ENCODE measurements at regions of chr1 and their contacts with region 1.

Region 1: DNA sequence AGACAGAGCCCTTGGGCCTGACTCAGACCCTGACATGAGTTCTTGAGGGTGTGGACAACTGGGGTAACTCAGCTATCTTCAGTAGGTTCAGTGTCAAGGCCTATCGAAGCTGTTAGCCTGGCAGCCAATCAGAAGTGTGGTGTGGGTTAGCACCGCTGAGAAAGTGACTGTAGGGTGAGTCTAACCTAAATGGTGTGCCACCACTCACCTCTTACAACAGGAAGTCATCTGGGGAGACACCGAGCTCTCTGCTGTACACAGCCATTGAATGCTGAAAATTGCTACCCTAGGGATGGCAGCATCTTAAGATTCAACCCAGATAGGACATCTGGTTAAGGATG is 44.6 kb downstream of the RASSF5 start:
- DNase-seq: peak; percentile 86
- H3K4me3 Mint-ChIP-seq: peak overlapping the region; percentile 56
- H3K27ac Mint-ChIP-seq: peak overlapping the region; percentile 89
- H3K4me1 Mint-ChIP-seq: peaks cover 62% of the 10 kb centered on the region
- H3K27me3 Mint-ChIP-seq: no peaks in the 10 kb centered on the region

Region 2: DNA sequence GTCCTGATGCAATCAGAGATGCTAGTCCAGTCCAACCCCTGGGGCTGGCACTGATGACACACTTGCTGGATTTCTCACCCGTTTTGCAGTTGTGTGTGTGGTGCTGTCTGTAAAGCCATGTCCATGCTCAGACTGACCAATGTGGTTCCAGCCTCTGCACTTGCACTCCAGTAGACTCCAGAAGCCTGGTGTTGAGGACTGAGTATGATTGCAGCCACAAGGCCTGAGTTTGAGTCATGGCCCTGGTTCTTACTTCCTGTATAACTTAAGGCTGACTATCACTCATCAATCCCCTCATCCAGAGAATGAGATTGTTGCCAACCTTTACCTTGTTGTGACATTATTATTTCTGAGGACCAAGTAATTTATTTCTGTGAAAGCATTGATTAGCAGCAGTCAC is 116.5 kb before region 1 on chr1:
- CTCF ChIA-PET with region 1: no interaction called
- DNase-seq: no peak
- H3K4me3 Mint-ChIP-seq: no peak overlapping the region
- H3K27ac Mint-ChIP-seq: no peak overlapping the region
- H3K4me1 Mint-ChIP-seq: no peaks in the 10 kb centered on the region
- H3K27me3 Mint-ChIP-seq: no peaks in the 10 kb centered on the region

Region 3: GRCh38 chr1:206513312-206514111 is 38.4 kb before region 1 on chr1:
- CTCF ChIA-PET with region 1: no interaction called
- DNase-seq: no peak
- H3K4me3 Mint-ChIP-seq: no peak overlapping the region
- H3K27ac Mint-ChIP-seq: no peak overlapping the region
- H3K4me1 Mint-ChIP-seq: no peaks in the 10 kb centered on the region
- H3K27me3 Mint-ChIP-seq: peaks cover 89% of the 10 kb centered on the region

Region 4: DNA sequence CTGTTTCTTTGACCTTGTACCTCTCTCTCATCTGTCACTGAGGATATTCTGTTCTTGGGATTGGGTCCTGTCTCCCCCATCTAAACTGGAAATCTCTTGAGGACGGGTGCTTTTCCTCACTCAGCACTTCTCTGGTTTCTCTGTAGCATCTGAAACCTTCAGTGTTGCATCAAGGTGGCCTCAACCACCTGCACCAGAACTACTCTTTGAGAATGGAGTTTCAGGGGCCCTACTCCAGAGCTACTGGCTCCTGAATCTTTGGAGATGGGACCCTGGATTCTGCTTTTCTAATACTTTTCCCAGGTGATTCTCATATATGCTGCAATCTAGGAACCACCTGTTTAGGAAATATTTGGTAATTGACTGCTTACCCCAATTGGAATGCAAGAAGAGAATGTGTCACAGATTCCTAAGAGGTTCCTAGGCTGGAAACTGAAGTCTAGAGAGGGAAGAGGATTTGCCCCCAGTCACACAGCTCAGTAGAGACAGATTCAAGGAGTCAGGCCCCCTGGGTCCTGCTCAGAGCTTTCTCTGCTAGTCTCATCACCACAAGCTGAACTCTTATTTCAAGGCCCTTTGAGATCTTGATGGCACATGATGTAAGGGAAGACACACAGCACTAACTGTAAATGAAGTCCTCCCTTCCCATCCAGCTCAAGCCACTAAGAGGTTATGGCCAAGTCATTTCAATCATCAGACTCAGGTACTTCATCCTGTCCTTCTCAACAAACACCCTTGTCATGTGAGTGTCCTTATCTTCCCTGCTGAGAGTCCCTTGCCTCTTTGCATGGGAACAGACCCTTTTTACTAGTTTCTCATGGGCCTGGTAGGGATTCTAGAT is 11.6 kb after region 1 on chr1:
- CTCF ChIA-PET with region 1: interaction called, 22 read pairs
- DNase-seq: no peak
- H3K4me3 Mint-ChIP-seq: peak overlapping the region; percentile 56
- H3K27ac Mint-ChIP-seq: peak overlapping the region; percentile 93
- H3K4me1 Mint-ChIP-seq: peaks cover 93% of the 10 kb centered on the region
- H3K27me3 Mint-ChIP-seq: no peaks in the 10 kb centered on the region

Region 5: GRCh38 chr1:206612129-206612876 is 60.3 kb after region 1 on chr1 and contains the start of gene EIF2D:
- CTCF ChIA-PET with region 1: interaction called, 24 read pairs
- DNase-seq: peak; percentile 94
- H3K4me3 Mint-ChIP-seq: peak within 1 kb of the TSS; percentile 81
- H3K27ac Mint-ChIP-seq: peak within 1 kb of the TSS; percentile 86
- H3K4me1 Mint-ChIP-seq: peaks cover 30% of the 10 kb centered on the region
- H3K27me3 Mint-ChIP-seq: peaks cover 18% of the 10 kb centered on the region

Region 6: DNA sequence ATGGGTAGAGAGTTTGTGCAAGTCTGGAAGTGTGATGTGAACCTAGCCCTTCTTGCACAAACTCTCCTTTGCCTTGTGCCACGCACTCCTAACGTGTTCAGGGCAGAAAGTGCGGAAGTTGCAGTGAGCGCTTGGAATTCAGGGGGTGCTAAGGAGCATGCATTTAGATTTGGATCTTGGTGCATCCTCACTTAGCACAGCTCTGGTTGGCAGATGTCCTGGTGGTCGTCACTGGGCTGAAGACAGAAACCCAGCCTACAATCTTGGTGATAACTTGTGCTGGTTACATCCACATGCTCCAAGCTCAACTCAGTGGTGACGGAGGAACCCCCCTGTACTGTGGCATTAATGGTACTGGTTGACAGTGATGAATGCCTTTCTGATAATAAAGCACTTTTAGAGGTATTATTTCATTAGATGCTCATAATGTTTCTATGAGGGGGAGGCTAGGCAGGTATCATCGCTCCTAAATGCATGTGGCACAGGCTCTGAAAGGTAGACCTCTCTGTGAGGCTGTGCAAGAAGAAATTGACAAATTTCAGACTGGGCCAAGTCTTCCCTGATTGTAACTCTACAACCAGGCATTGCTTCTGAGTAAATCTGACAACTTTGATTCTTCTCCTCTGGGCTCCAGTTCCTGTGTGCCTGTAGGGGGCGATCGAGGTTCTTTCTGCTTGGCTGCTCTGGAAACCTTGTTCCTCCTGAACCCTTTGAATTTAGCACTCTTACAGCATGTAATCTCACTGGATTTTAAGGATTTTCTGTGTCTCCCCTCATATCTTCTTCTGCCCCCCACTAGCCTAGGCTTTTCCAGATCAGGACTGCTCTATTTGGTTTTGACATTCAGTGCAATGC is 173.4 kb after region 1 on chr1:
- CTCF ChIA-PET with region 1: no interaction called
- DNase-seq: peak; percentile 80
- H3K4me3 Mint-ChIP-seq: no peak overlapping the region
- H3K27ac Mint-ChIP-seq: no peak overlapping the region
- H3K4me1 Mint-ChIP-seq: peaks cover 26% of the 10 kb centered on the region
- H3K27me3 Mint-ChIP-seq: no peaks in the 10 kb centered on the region

Measured in activated naive CD4-positive, alpha-beta T cell treated with anti-CD3 and anti-CD28 coated beads, Interleukin-2, amount 10 ng/mL, durations not matched to agents 7 days and 5 days (primary cell).